Activated T-helper 2 cell treated with anti-CD3 and anti-CD28 coated beads, Interferon-gamma antibody, Interleukin-2, Interleukin-4, amounts not matched to agents 10 μg/mL and 5 μg/mL and 100 μg/mL, durations not matched to agents 14 hours and 24 hours and 36 hours (primary cell): ENCODE measurements at regions of chr15 and their contacts with region 1.

Region 1: DNA sequence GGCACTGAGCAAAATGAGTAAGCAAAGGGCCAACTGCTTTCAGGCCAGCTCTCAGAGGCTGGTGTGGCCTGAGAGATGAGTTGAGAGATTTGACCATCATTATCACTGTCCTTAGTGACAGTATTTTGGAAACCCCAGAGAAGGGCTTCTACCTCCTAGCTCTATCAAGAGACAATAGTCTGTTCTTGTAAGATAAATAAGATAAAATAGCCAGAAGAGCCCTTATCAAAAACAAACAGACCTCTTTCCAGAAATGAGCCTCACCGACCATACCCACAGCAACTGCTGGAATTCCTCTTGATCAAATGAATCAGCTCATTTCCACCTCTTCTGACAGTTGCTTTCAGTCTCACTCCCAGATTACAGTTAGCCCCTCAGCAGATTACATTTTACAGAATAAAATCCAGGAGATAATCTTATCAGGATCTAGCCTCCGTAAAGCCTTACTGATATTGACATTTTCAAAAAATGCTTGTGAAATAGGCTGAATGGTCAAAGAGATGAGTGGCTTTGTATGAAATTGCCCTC is 4.5 kb downstream of the HDC start:
- DNase-seq: no peak
- H3K4me3 Mint-ChIP-seq: peak overlapping the region; percentile 64
- H3K27ac Mint-ChIP-seq: peak overlapping the region; percentile 98
- H3K4me1 Mint-ChIP-seq: peaks cover 76% of the 10 kb centered on the region
- H3K27me3 Mint-ChIP-seq: no peaks in the 10 kb centered on the region

Region 2: GRCh38 chr15:50066192-50066591 is 194.8 kb before region 1 on chr15:
- intact Hi-C with region 1: loop called (anchors 1 kb)
- DNase-seq: peak; percentile 30
- H3K4me3 Mint-ChIP-seq: peak overlapping the region; percentile 18
- H3K27ac Mint-ChIP-seq: peak overlapping the region; percentile 95
- H3K4me1 Mint-ChIP-seq: peaks cover 58% of the 10 kb centered on the region
- H3K27me3 Mint-ChIP-seq: no peaks in the 10 kb centered on the region

Region 3: GRCh38 chr15:50166216-50166615 is 94.8 kb before region 1 on chr15:
- intact Hi-C with region 1: loop called (anchors 1 kb)
- DNase-seq: no peak
- H3K4me3 Mint-ChIP-seq: no peak overlapping the region
- H3K27ac Mint-ChIP-seq: peak overlapping the region; percentile 79
- H3K4me1 Mint-ChIP-seq: peaks cover 19% of the 10 kb centered on the region
- H3K27me3 Mint-ChIP-seq: peaks cover 4% of the 10 kb centered on the region

Region 4: GRCh38 chr15:50247819-50248655 is 13.0 kb before region 1 on chr15:
- intact Hi-C with region 1: loop called (anchors 1 kb)
- DNase-seq: peak; percentile 62
- H3K4me3 Mint-ChIP-seq: peak overlapping the region; percentile 82
- H3K27ac Mint-ChIP-seq: peak overlapping the region; percentile 99
- H3K4me1 Mint-ChIP-seq: peaks cover 68% of the 10 kb centered on the region
- H3K27me3 Mint-ChIP-seq: no peaks in the 10 kb centered on the region

Region 5: GRCh38 chr15:50345298-50345697 is 84.3 kb after region 1 on chr15:
- intact Hi-C with region 1: no loop called
- DNase-seq: no peak
- H3K4me3 Mint-ChIP-seq: no peak overlapping the region
- H3K27ac Mint-ChIP-seq: no peak overlapping the region
- H3K4me1 Mint-ChIP-seq: peaks cover 26% of the 10 kb centered on the region
- H3K27me3 Mint-ChIP-seq: no peaks in the 10 kb centered on the region

Region 6: GRCh38 chr15:50377867-50378751 is 117.1 kb after region 1 on chr15:
- intact Hi-C with region 1: loop called (anchors 1 kb)
- DNase-seq: no peak
- H3K4me3 Mint-ChIP-seq: peak overlapping the region; percentile 51
- H3K27ac Mint-ChIP-seq: peak overlapping the region; percentile 92
- H3K4me1 Mint-ChIP-seq: peaks cover 18% of the 10 kb centered on the region
- H3K27me3 Mint-ChIP-seq: no peaks in the 10 kb centered on the region

Region 7: DNA sequence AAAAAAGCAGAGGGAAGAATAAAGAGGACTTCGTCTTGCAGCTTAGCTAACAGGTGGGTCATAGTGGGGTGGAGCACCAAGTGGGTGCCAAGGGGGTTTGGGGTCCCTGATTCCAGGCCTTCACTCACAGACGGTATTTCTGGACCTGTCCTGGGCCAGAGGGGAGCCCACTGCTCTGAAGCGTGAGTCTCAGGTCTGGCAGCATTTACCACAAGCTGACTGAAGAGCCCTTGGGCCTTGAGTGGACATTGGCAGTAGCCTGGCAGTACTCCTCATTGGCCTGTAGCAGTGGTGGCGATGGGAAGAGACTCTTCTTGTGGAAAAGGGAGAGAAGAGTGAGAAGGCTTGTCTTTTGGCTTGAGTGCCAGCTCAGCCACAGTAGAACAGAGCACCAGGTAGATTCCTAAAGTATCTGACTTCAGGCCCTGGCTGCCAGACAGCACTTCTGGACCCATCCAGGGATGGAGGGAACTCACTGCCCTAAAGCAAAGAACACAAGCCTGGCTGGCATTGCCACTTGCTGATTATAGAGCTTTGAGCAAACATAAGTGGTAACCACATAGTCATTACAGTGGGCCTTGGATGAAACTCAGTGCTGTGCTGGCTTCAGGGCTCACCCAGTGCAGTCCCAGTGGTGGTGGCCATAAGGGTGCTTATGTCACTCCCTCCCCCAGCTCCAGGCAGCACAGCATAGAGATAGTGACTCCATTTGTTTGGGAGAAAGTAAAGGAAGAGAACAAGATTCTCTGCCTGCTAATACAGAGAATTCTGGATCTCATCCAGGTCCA is 1153.4 kb after region 1 on chr15:
- intact Hi-C with region 1: no loop called
- DNase-seq: no peak
- H3K4me3 Mint-ChIP-seq: no peak overlapping the region
- H3K27ac Mint-ChIP-seq: no peak overlapping the region
- H3K4me1 Mint-ChIP-seq: no peaks in the 10 kb centered on the region
- H3K27me3 Mint-ChIP-seq: peaks cover 3% of the 10 kb centered on the region